Naive thymus-derived CD4-positive, alpha-beta T cell (primary cell): ENCODE measurements at regions of chr4 and their contacts with region 1.

Region 1: DNA sequence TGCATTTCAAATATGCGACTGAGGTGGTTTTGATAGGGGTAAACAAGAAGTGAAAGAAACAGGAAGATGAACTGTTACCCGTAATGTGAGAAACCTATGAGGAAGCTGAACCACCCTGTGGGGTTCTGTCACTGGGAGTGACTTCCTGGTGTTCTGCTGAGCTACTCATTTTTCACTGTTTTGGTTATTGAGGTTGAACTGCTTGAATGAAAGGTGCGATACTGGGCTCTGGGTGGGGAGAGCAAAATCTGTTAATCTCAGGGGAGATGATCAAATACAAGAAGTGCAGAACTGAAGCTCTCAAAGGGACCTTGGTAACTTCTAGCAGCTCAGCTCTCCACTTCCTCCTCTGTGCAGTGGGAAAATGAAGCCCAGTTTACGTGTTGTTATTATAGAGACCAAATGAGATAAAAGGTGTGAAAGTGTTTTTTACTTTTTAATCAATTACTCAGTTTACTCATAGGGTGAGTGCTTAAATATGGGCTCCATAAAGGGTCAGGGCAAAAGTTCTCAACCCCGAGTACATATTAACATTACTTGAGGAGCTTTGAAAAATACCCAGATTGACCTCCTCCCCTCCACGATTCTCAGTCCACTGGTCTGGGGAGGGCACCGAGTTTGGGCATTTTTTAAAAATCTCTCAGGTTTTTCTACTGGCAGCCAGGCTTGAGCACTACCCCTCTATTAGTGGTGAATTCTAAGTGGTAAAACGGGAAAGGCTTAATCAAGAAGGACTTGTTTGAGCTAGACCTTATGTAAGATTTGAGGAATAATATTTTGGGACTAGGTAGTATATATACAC is 66.7 kb downstream of the COQ2 start:
- DNase-seq: peak in 8 of 9 donors; percentile 52 to 91 (median 84)
- ATAC-seq: peak; percentile 95
- H3K4me3 ChIP-seq: peak overlapping the region; percentile 23
- H3K4me3 Mint-ChIP-seq: peak overlapping the region; percentile 57 to 84 (median 72)
- H3K27ac ChIP-seq: peak overlapping the region; percentile 78
- H3K27ac Mint-ChIP-seq: peak overlapping the region; percentile 88 to 96 (median 92)
- H3K4me1 ChIP-seq: peaks cover 65 to 77% of the 10 kb centered on the region in 2 donors
- H3K4me1 Mint-ChIP-seq: peaks cover 56 to 83% (median 74%) of the 10 kb centered on the region in 7 donors
- H3K27me3 ChIP-seq: no peaks in the 10 kb centered on the region
- H3K27me3 Mint-ChIP-seq: no peaks in the 10 kb centered on the region

Region 2: GRCh38 chr4:82643994-82644733 is 573.8 kb before region 1 on chr4:
- CTCF ChIA-PET with region 1: no interaction called
- POLR2A ChIA-PET with region 1: no interaction called
- intact Hi-C with region 1: no loop called
- DNase-seq: no peak
- ATAC-seq: no peak
- H3K4me3 ChIP-seq: no peak overlapping the region
- H3K4me3 Mint-ChIP-seq: no peak overlapping the region
- H3K27ac ChIP-seq: no peak overlapping the region
- H3K27ac Mint-ChIP-seq: no peak overlapping the region
- H3K4me1 ChIP-seq: no peaks in the 10 kb centered on the region
- H3K4me1 Mint-ChIP-seq: no peaks in the 10 kb centered on the region
- H3K27me3 ChIP-seq: no peaks in the 10 kb centered on the region
- H3K27me3 Mint-ChIP-seq: peaks cover 4 to 26% (median 10%) of the 10 kb centered on the region in 5 donors

Region 3: GRCh38 chr4:82900331-82901128 is 317.4 kb before region 1 on chr4 and contains the start of gene THAP9:
- CTCF ChIA-PET with region 1: no interaction called
- POLR2A ChIA-PET with region 1: no interaction called
- intact Hi-C with region 1: loop called in 1 of 2 experiments (anchors 1 kb)
- DNase-seq: peak; percentile 92 to 100 (median 98)
- ATAC-seq: peak; percentile 91
- H3K4me3 ChIP-seq: peak within 1 kb of the TSS; percentile 91
- H3K4me3 Mint-ChIP-seq: no peak within 1 kb of the TSS
- H3K27ac ChIP-seq: peak within 1 kb of the TSS; percentile 98
- H3K27ac Mint-ChIP-seq: no peak within 1 kb of the TSS
- H3K4me1 ChIP-seq: peaks cover 13 to 15% of the 10 kb centered on the region in 2 donors
- H3K4me1 Mint-ChIP-seq: peaks cover 0 to 30% (median 15%) of the 10 kb centered on the region in 7 donors
- H3K27me3 ChIP-seq: no peaks in the 10 kb centered on the region
- H3K27me3 Mint-ChIP-seq: peaks cover 0 to 2% (median 0%) of the 10 kb centered on the region in 5 donors
- total RNA-seq, gene THAP9: 2.2 to 4.9 (median 4.4) TPM

Region 4: DNA sequence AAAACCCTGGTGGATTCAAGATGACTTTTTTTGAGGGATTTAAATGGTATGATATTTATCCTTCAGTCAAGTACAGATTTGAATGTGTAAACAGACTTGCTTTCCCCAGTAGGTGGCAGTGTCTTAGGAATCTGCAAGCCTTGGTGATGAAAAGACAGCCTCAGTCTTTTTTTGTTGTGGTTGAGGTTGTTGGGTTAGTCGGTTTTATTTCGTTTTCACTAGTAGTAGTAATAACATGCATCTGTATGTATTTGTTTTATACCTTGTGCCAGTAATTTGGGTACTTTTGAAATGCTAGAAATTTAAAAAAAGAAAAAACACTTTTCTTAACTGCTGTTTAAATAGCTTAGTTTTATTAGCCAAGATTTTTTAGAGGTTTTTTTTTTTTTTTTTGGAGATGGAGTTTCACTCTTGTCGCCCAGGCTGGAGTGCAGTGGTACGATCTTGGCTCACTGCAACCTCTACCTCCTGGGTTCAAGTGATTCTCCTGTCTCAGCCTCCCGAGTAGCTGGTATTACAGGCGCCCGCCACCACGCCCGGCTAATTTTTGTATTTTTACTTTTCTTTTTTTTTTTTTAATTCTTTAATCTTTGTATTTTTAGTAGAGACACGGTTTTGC is 143.7 kb before region 1 on chr4:
- CTCF ChIA-PET with region 1: interaction called, 6 read pairs
- POLR2A ChIA-PET with region 1: interaction called, 5 read pairs
- intact Hi-C with region 1: loop called (anchors 1 kb)
- DNase-seq: peak in 8 of 9 donors; percentile 49 to 91 (median 85)
- ATAC-seq: peak; percentile 99
- H3K4me3 ChIP-seq: no peak overlapping the region
- H3K4me3 Mint-ChIP-seq: peak overlapping the region; percentile 43 to 85 (median 76)
- H3K27ac ChIP-seq: no peak overlapping the region
- H3K27ac Mint-ChIP-seq: peak overlapping the region; percentile 19 to 87 (median 79)
- H3K4me1 ChIP-seq: peaks cover 0 to 6% of the 10 kb centered on the region in 2 donors
- H3K4me1 Mint-ChIP-seq: peaks cover 8 to 28% (median 14%) of the 10 kb centered on the region in 7 donors
- H3K27me3 ChIP-seq: no peaks in the 10 kb centered on the region
- H3K27me3 Mint-ChIP-seq: no peaks in the 10 kb centered on the region

Region 5: DNA sequence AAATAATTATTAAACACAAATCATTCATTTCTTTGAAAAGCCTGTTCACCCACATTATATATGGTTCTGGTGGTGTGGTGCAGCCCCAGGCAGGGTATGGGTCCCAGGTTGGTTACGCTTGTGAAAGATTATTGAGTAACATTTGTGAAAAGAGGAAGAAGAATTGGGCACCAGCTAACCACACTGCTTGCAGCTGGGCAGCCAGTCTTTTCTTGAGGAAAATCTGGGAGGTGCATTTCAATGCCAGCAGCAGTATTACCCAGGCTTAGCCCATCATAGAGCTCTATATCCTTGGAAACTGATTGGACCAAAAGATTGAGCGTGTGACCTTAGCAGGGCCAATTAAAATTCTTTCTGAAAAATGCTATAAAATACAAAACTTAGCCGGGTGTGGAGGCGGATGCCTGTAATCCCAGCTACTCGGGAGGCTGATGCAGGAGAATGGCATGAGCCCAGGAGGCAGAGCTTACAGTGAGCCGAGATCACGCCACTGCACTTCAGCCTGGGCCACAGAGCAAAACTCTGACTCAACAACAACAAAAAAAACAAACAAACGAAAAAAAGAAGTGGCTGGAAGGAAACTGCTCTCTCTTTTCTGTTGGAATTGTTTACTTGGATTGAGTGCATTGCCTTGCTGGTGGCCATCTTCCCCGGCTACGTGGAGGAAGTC is 93.7 kb before region 1 on chr4:
- CTCF ChIA-PET with region 1: no interaction called
- POLR2A ChIA-PET with region 1: no interaction called
- intact Hi-C with region 1: no loop called
- DNase-seq: no peak
- ATAC-seq: peak; percentile 68
- H3K4me3 ChIP-seq: no peak overlapping the region
- H3K4me3 Mint-ChIP-seq: peak overlapping the region in 2 of 10 donors; percentile 31 to 37
- H3K27ac ChIP-seq: no peak overlapping the region
- H3K27ac Mint-ChIP-seq: peak overlapping the region in 4 of 9 donors; percentile 5 to 75 (median 54)
- H3K4me1 ChIP-seq: peaks cover 0 to 10% of the 10 kb centered on the region in 2 donors
- H3K4me1 Mint-ChIP-seq: peaks cover 13 to 36% (median 21%) of the 10 kb centered on the region in 7 donors
- H3K27me3 ChIP-seq: no peaks in the 10 kb centered on the region
- H3K27me3 Mint-ChIP-seq: peaks cover 0 to 19% (median 0%) of the 10 kb centered on the region in 5 donors

Region 6: DNA sequence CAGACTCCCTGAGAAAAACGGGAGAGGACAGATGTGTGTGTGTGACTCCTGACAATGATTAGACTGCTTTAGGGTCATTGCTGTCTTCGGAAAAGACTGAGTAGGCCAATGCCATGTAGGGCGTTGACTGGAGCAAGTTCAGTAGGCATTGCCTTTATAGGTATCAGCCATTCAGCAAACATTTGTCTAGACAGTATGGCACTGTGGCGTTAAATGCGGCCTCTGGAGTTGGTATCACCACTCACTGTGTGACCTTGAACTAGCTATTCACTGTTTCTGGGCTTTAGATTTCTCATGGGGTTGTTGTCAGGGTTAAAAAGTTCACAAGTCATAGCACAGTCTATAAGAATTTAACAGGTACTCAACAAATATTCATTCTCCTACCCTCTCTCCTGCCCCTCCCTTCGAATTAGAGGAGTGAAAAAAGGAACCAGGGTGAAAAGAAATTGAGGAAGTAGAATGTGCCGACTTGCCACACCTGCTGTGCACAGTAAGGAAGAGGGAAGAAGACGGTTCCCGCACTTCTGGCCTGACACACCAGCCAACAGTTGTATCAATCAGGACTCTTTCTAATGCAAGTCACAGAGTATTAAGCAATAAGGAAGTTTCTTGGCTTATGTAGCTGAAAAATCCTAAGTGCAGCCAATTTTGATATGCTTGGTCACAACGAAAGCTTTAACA is 20.2 kb before region 1 on chr4:
- CTCF ChIA-PET with region 1: no interaction called
- POLR2A ChIA-PET with region 1: no interaction called
- intact Hi-C with region 1: loop called (anchors 2 kb)
- DNase-seq: no peak
- ATAC-seq: peak; percentile 76
- H3K4me3 ChIP-seq: no peak overlapping the region
- H3K4me3 Mint-ChIP-seq: no peak overlapping the region
- H3K27ac ChIP-seq: no peak overlapping the region
- H3K27ac Mint-ChIP-seq: peak overlapping the region in 1 of 9 donors; percentile 11
- H3K4me1 ChIP-seq: no peaks in the 10 kb centered on the region
- H3K4me1 Mint-ChIP-seq: peaks cover 5 to 12% (median 7%) of the 10 kb centered on the region in 7 donors
- H3K27me3 ChIP-seq: no peaks in the 10 kb centered on the region
- H3K27me3 Mint-ChIP-seq: no peaks in the 10 kb centered on the region

Region 7: GRCh38 chr4:83237591-83237990 is 19.7 kb after region 1 on chr4:
- CTCF ChIA-PET with region 1: interaction called, 6 read pairs
- POLR2A ChIA-PET with region 1: interaction called, 26 read pairs
- intact Hi-C with region 1: loop called (anchors 1 kb)
- DNase-seq: no peak
- ATAC-seq: no peak
- H3K4me3 ChIP-seq: no peak overlapping the region
- H3K4me3 Mint-ChIP-seq: no peak overlapping the region
- H3K27ac ChIP-seq: no peak overlapping the region
- H3K27ac Mint-ChIP-seq: peak overlapping the region in 1 of 9 donors; percentile 32
- H3K4me1 ChIP-seq: peaks cover 22 to 29% of the 10 kb centered on the region in 2 donors
- H3K4me1 Mint-ChIP-seq: peaks cover 40 to 70% (median 63%) of the 10 kb centered on the region in 7 donors
- H3K27me3 ChIP-seq: no peaks in the 10 kb centered on the region
- H3K27me3 Mint-ChIP-seq: peaks cover 0 to 57% (median 0%) of the 10 kb centered on the region in 5 donors